ENCODE measurements at regions of chr9 and their contacts with region 1.

Region 1: GRCh38 chr9:5336688-5337087 is 3.0 kb downstream of the RLN1 start:
- DNase-seq: peak in 7 of 9 donors; percentile 47 to 70 (median 60)
- ATAC-seq: peak; percentile 62
- H3K4me3 ChIP-seq: peak overlapping the region; percentile 27
- H3K4me3 Mint-ChIP-seq: peak overlapping the region; percentile 64 to 87 (median 80)
- H3K27ac ChIP-seq: peak overlapping the region; percentile 64
- H3K27ac Mint-ChIP-seq: peak overlapping the region; percentile 79 to 95 (median 91)
- H3K4me1 ChIP-seq: peaks cover 24 to 28% of the 10 kb centered on the region in 2 donors
- H3K4me1 Mint-ChIP-seq: peaks cover 20 to 64% (median 50%) of the 10 kb centered on the region in 7 donors
- H3K27me3 ChIP-seq: no peaks in the 10 kb centered on the region
- H3K27me3 Mint-ChIP-seq: no peaks in the 10 kb centered on the region

Region 2: GRCh38 chr9:4214486-4214885 is 1122.2 kb before region 1 on chr9:
- CTCF ChIA-PET with region 1: no interaction called
- POLR2A ChIA-PET with region 1: no interaction called
- intact Hi-C with region 1: no loop called
- DNase-seq: no peak
- ATAC-seq: no peak
- H3K4me3 ChIP-seq: no peak overlapping the region
- H3K4me3 Mint-ChIP-seq: no peak overlapping the region
- H3K27ac ChIP-seq: no peak overlapping the region
- H3K27ac Mint-ChIP-seq: no peak overlapping the region
- H3K4me1 ChIP-seq: no peaks in the 10 kb centered on the region
- H3K4me1 Mint-ChIP-seq: peaks cover 0 to 17% (median 0%) of the 10 kb centered on the region in 7 donors
- H3K27me3 ChIP-seq: no peaks in the 10 kb centered on the region
- H3K27me3 Mint-ChIP-seq: peaks cover 0 to 6% (median 0%) of the 10 kb centered on the region in 5 donors

Region 3: DNA sequence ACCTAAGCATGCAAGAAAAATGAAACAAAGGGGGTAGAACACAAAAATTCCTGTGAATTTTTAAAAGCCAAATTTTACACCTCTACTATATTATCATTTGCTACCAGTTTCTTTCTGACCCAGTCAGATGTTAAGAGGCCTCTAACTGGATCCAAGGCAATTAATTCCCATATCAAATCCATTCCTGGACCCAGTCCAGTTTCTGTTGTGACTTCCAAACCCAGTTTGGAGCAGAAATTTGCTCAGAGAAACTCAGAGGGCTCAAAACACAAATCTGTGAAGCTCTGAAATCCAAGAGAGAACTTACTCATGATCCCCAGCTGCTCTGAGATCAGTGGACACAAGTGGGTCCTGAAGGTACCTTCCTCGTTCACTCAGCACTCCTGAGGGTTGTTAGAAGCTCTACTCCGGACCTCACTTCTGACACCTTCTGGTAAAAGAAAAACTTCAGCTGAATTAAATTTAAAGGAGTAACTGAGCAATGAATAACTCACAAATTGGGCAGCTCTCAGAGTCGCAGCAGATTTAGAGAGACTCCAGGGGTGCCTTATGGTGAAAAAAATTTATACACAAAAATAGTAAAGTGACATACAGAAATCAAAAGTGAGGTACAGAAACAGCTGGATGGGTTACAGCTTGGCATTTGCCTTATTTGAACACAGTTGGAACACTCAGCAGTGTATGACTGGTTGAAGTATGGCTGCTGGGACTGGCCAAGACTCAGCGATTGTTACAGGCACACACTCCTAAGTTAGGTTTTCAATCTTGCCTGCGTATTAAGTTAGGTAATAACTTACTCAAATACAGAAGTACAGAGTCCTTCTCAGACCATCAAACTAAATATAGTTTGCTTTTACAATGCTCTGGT is 73.1 kb before region 1 on chr9:
- CTCF ChIA-PET with region 1: interaction called, 3 read pairs
- POLR2A ChIA-PET with region 1: no interaction called
- intact Hi-C with region 1: loop called in 1 of 2 experiments (anchors 5 kb)
- DNase-seq: peak in 5 of 9 donors; percentile 1 to 23 (median 4)
- ATAC-seq: no peak
- H3K4me3 ChIP-seq: no peak overlapping the region
- H3K4me3 Mint-ChIP-seq: peak overlapping the region in 6 of 10 donors; percentile 23 to 36 (median 30)
- H3K27ac ChIP-seq: no peak overlapping the region
- H3K27ac Mint-ChIP-seq: peak overlapping the region in 2 of 9 donors; percentile 0 to 19
- H3K4me1 ChIP-seq: no peaks in the 10 kb centered on the region
- H3K4me1 Mint-ChIP-seq: peaks cover 9 to 24% (median 17%) of the 10 kb centered on the region in 7 donors
- H3K27me3 ChIP-seq: no peaks in the 10 kb centered on the region
- H3K27me3 Mint-ChIP-seq: no peaks in the 10 kb centered on the region

Region 4: DNA sequence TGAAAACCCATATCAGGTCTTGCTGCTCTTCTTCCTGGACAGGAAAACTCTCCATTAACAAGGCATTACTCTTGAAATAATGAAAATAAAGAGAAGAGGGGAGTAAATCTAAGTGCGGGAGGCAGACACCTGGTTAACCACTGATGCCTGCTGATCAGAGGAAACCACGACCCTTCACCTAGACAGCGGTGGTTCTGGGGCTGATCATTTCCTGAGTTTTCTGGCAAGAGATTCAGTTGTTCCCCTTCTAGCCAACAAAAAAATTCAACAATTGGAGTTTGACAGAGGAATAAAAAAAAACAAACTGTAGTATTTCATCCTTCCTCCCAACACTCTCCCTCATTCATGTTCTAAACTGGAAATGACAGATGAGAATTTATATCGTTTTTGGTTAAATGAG is 35.1 kb before region 1 on chr9:
- CTCF ChIA-PET with region 1: no interaction called
- POLR2A ChIA-PET with region 1: no interaction called
- intact Hi-C with region 1: loop called (anchors 2 to 5 kb)
- DNase-seq: peak in 6 of 9 donors; percentile 16 to 34 (median 21)
- ATAC-seq: no peak
- H3K4me3 ChIP-seq: no peak overlapping the region
- H3K4me3 Mint-ChIP-seq: peak overlapping the region; percentile 5 to 80 (median 69)
- H3K27ac ChIP-seq: no peak overlapping the region
- H3K27ac Mint-ChIP-seq: peak overlapping the region in 7 of 9 donors; percentile 52 to 91 (median 78)
- H3K4me1 ChIP-seq: peaks cover 7 to 11% of the 10 kb centered on the region in 2 donors
- H3K4me1 Mint-ChIP-seq: peaks cover 15 to 40% (median 25%) of the 10 kb centered on the region in 7 donors
- H3K27me3 ChIP-seq: no peaks in the 10 kb centered on the region
- H3K27me3 Mint-ChIP-seq: no peaks in the 10 kb centered on the region

Region 5: DNA sequence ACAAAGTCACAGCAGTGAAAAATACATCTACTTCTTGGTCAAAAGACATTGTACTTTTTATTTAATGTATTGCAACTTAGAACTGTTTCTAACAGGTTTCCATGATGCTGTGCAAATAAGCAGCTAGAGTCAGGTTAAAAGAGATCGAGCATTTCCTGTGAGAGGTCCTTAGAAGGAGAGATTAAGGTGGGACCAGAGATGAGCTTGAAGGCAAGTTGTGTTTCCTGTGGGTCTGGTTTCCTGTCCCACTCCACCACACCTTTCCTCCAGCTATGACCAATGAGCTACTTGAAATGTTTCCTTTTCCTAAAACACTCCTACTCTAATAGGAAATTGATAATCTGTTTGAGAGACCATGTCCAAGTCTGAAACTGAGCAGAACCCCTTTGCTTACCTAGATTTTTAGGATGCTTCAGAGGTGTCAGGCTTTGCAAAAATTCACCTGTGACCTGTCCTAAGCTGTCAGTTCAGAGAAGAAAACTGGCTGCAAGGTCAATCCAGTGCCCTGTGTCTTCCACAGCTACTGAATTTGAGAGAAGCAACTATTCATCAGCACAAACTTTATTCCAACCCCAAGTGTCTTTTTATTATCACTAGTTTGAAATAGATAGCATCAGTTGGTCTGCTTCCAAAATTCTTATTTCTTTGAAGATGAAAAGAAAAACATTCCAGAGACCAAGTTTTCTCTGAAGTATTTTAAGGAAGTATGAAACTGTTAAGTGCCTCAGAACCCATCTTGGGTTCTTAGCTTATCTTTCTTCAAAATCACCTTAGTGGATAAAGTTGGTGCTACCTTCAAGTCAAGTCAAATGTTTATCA is 16.2 kb after region 1 on chr9:
- CTCF ChIA-PET with region 1: no interaction called
- POLR2A ChIA-PET with region 1: interaction called, 12 read pairs
- intact Hi-C with region 1: loop called in 1 of 2 experiments (anchors 1 kb)
- DNase-seq: peak in 6 of 9 donors; percentile 17 to 40 (median 36)
- ATAC-seq: peak; percentile 70
- H3K4me3 ChIP-seq: no peak overlapping the region
- H3K4me3 Mint-ChIP-seq: peak overlapping the region; percentile 21 to 75 (median 64)
- H3K27ac ChIP-seq: no peak overlapping the region
- H3K27ac Mint-ChIP-seq: peak overlapping the region; percentile 62 to 87 (median 76)
- H3K4me1 ChIP-seq: peaks cover 35 to 38% of the 10 kb centered on the region in 2 donors
- H3K4me1 Mint-ChIP-seq: peaks cover 21 to 61% (median 39%) of the 10 kb centered on the region in 7 donors
- H3K27me3 ChIP-seq: no peaks in the 10 kb centered on the region
- H3K27me3 Mint-ChIP-seq: no peaks in the 10 kb centered on the region

Region 6: DNA sequence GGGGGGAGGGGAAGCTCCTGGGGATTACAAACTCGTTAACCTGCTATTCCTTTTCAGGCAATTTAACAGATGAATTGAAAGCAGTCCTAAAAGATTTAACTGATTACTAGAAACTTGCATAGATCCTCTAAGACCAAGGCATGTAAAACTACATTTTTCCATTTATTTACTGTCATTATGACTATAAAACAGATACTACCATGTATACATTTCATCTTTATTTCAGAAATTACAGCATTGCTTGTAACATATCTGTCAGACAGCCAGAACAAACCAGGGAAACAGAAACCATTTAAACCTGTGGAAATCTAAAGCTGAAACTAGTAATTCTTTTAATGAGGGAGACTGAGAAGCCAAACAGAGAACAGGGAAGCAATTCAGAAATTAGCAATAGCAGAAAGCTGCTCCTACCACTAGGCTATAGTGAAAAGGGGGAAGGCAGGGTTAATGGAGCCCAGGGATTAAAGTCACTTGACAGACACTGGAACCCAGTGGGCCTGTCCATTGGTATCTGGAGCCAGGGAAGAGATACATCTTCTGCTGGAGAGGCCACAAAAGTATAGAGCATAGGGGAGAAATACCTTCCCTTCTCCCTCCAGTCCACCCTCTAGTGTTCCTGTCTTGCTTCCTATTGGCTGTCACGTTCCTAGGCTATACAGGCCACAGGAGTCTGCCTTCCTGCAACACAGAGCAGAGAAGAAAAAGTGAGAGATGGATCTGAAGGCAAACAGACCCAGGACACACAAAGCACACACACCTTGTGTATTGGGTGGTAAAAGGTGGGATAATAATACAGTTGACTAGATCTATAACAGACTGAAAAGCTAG is 207.4 kb after region 1 on chr9:
- CTCF ChIA-PET with region 1: no interaction called
- POLR2A ChIA-PET with region 1: no interaction called
- intact Hi-C with region 1: no loop called
- DNase-seq: no peak
- ATAC-seq: no peak
- H3K4me3 ChIP-seq: no peak overlapping the region
- H3K4me3 Mint-ChIP-seq: no peak overlapping the region
- H3K27ac ChIP-seq: no peak overlapping the region
- H3K27ac Mint-ChIP-seq: peak overlapping the region in 2 of 9 donors; percentile 41 to 53
- H3K4me1 ChIP-seq: no peaks in the 10 kb centered on the region
- H3K4me1 Mint-ChIP-seq: peaks cover 0 to 36% (median 0%) of the 10 kb centered on the region in 7 donors
- H3K27me3 ChIP-seq: no peaks in the 10 kb centered on the region
- H3K27me3 Mint-ChIP-seq: no peaks in the 10 kb centered on the region